ENCODE measurements at regions of chr6 and their contacts with region 1.

Region 1: DNA sequence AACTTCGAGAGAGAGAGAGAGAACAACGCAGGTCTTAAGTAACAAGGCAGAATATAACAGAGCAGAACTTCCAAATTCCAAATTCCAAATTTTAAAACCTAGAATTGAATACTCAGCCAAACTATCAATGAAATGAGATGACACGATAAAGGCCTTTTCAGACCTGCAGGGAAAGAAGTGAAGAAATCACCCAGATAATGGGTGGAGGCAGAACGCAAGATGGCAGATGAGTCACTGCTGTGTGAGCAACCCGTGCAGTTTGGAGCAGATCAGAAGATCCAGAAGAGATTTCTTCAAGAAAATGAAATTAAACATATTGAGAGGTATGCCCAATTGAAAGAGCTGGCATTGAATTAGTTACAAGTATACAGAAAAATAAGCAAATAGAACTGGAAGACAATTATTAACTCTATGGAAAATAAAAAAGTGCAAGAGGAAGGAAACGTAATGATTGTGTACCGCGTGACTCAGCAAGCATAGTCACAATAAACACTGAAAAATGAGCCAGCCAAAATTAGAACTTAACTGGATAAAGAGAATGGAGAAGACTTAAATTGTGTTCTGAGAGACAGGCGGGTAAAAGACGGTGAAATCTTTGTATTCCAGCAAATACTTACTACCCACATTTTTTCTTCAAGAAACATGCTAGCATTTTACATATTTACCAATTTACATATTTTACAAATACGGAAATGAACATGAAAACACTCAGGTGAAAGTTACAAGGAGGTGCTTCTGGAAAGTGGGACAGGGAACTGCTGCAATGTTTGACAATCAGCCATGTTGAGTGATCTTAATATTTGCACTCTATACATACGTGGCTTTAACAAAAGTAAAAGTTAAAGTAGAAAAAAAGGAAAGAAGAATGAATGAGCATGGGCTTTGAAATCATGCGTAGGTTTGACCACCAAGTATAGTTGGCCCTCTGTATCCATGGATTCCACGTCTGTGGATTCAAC is 87.9 kb upstream of the CDYL start:
- DNase-seq: no peak
- H3K4me3 ChIP-seq: no peak overlapping the region
- H3K27ac ChIP-seq: no peak overlapping the region
- H3K4me1 ChIP-seq: no peaks in the 10 kb centered on the region
- H3K27me3 ChIP-seq: no peaks in the 10 kb centered on the region
- CTCF ChIP-seq: no peak
- EP300 ChIP-seq: no peak
- POLR2A ChIP-seq: no peak

Region 2: DNA sequence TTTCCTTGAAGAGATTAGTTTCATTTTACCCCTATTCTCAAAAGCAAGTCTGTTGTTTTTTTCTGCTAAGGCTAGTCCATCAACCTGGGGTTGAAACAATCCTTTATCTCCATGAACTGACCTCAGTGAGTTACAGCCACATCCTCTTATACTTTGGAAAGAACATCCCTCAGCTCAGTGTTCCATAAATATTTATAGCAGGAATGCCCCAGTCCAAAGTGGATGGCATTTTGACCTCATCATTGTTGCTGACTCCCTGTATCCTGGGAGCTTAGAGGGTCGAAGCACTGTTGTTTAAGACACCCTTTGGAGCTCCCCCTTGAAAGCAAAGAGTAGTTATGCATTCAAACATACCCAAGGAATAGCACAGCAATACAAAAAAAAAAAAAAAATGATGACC is 71.7 kb after region 1 on chr6:
- in situ Hi-C with region 1: no loop called
- intact Hi-C with region 1: loop called (anchors 2 kb)
- DNase-seq: no peak
- H3K4me3 ChIP-seq: no peak overlapping the region
- H3K27ac ChIP-seq: no peak overlapping the region
- H3K4me1 ChIP-seq: no peaks in the 10 kb centered on the region
- H3K27me3 ChIP-seq: no peaks in the 10 kb centered on the region
- CTCF ChIP-seq: no peak
- EP300 ChIP-seq: no peak
- POLR2A ChIP-seq: no peak

Region 3: DNA sequence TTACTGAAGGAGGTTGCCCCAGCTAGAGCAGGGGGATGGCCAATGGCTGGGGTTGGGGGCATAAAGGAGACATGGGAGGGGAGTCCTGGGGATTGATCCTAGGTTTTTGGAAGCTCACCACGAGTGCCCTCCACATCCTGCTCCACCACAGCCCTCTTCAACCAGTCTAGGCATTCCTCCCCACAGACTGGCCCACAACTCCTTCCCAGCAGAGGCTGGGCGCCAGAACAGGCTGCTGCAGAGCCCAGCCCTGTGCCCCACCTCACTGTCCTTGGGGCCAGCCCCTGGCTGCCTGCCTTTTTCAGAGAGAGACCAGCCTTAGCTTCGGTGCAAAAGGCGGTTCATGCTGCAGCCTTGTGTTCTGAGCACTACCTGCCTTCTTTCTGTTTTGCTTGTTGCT is 299.2 kb after region 1 on chr6:
- in situ Hi-C with region 1: no loop called
- intact Hi-C with region 1: no loop called
- DNase-seq: no peak
- H3K4me3 ChIP-seq: no peak overlapping the region
- H3K27ac ChIP-seq: no peak overlapping the region
- H3K4me1 ChIP-seq: no peaks in the 10 kb centered on the region
- H3K27me3 ChIP-seq: no peaks in the 10 kb centered on the region
- CTCF ChIP-seq: no peak
- EP300 ChIP-seq: no peak
- POLR2A ChIP-seq: no peak

Measured in transverse colon (tissue), 4 donors.